GM12878 (cell line): ENCODE measurements at regions of chr18 and their contacts with region 1.

Region 1: GRCh38 chr18:3129053-3129864 is 90.5 kb downstream of the MYOM1 start:
- DNase-seq: no peak
- ATAC-seq: peak; percentile 100
- H3K4me3 ChIP-seq: no peak overlapping the region
- H3K27ac ChIP-seq: no peak overlapping the region
- H3K4me1 ChIP-seq: no peaks in the 10 kb centered on the region
- H3K27me3 ChIP-seq: no peaks in the 10 kb centered on the region
- CTCF ChIP-seq: peak; percentile 92 to 95 (median 95)
- EP300 ChIP-seq: no peak
- POLR2A ChIP-seq: no peak
- RAD21 ChIP-seq: peak; percentile 48

Region 2: GRCh38 chr18:3012964-3013804 is 116.1 kb before region 1 on chr18 and contains the start of gene LPIN2:
- CTCF ChIA-PET with region 1: interaction called, 6 read pairs
- POLR2A ChIA-PET with region 1: no interaction called
- RAD21 ChIA-PET with region 1: interaction called, 3 read pairs
- SMC1A ChIA-PET with region 1: interaction called, 7 read pairs
- in situ Hi-C with region 1: no loop called
- intact Hi-C with region 1: loop called (anchors 1 kb)
- DNase-seq: peak; percentile 71
- ATAC-seq: peak; percentile 88
- H3K4me3 ChIP-seq: peak within 1 kb of the TSS; percentile 74
- H3K27ac ChIP-seq: peak within 1 kb of the TSS; percentile 71
- H3K4me1 ChIP-seq: peaks cover 14% of the 10 kb centered on the region
- H3K27me3 ChIP-seq: no peaks in the 10 kb centered on the region
- CTCF ChIP-seq: no peak
- EP300 ChIP-seq: peak in 1 of 2 experiments; percentile 44; a peak in 1 of 4 replicates
- POLR2A ChIP-seq: peak; percentile 61; the same call in 1 of the 2 replicates
- RAD21 ChIP-seq: no peak
- polyA plus RNA-seq, gene LPIN2: 4.1 to 4.5 TPM

Region 3: DNA sequence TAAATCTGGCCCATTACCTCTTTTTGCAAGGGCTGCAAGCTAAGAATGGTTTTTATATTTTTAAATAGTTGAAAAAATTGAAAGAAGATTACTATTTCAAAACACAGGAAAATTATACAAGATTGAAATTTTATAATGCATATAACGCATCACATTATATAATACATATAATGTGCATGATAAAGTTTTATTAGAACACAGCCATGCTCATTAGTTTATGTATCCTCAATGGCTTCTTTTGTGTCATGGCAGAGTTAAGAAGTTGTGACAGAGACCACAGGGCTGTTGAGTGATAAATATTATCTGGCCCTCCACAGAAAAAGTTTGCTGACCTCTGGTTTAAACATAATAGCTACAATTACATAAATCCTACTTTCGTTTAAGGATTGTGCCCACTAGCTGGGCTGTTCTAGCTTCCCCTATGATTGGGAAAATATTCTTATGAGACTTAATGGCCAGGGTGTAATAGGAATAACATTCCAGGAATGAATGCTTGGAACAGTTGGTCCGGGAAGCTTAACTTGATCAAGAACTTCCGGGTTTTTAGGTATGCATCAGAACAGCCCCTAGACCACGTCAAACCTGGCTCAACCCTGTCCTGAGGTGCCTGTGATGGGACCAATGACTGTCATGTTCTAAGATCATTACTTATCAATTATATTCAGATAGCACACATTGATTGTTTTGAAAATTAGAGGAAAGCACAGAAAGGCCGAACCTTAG is 17.6 kb before region 1 on chr18:
- CTCF ChIA-PET with region 1: interaction called, 36 read pairs
- POLR2A ChIA-PET with region 1: interaction called, 8 read pairs
- RAD21 ChIA-PET with region 1: interaction called, 3 read pairs
- SMC1A ChIA-PET with region 1: interaction called, 7 read pairs
- in situ Hi-C with region 1: no loop called
- intact Hi-C with region 1: no loop called
- DNase-seq: no peak
- ATAC-seq: no peak
- H3K4me3 ChIP-seq: no peak overlapping the region
- H3K27ac ChIP-seq: no peak overlapping the region
- H3K4me1 ChIP-seq: no peaks in the 10 kb centered on the region
- H3K27me3 ChIP-seq: no peaks in the 10 kb centered on the region; a peak in 1 of 4 replicates
- CTCF ChIP-seq: no peak
- EP300 ChIP-seq: no peak
- POLR2A ChIP-seq: no peak
- RAD21 ChIP-seq: no peak

Region 4: GRCh38 chr18:3209859-3210569 is 80.8 kb after region 1 on chr18:
- CTCF ChIA-PET with region 1: no interaction called
- POLR2A ChIA-PET with region 1: no interaction called
- RAD21 ChIA-PET with region 1: no interaction called
- SMC1A ChIA-PET with region 1: no interaction called
- in situ Hi-C with region 1: no loop called
- intact Hi-C with region 1: no loop called
- DNase-seq: peak; percentile 20
- ATAC-seq: peak; percentile 97
- H3K4me3 ChIP-seq: no peak overlapping the region
- H3K27ac ChIP-seq: no peak overlapping the region
- H3K4me1 ChIP-seq: no peaks in the 10 kb centered on the region
- H3K27me3 ChIP-seq: no peaks in the 10 kb centered on the region
- CTCF ChIP-seq: no peak
- EP300 ChIP-seq: peak in 1 of 2 experiments; percentile 59; a peak in 1 of 4 replicates
- POLR2A ChIP-seq: no peak
- RAD21 ChIP-seq: no peak